ENCODE measurements at regions of chr22 and their contacts with region 1.

Region 1: GRCh38 chr22:38705235-38706100 is at the start of gene GTPBP1:
- DNase-seq: peak; percentile 98
- H3K4me3 Mint-ChIP-seq: peak within 1 kb of the TSS; percentile 92
- H3K27ac Mint-ChIP-seq: peak within 1 kb of the TSS; percentile 97
- H3K4me1 Mint-ChIP-seq: peaks cover 47% of the 10 kb centered on the region
- H3K27me3 Mint-ChIP-seq: peaks cover 1% of the 10 kb centered on the region
- total RNA-seq, gene GTPBP1: 95.4 to 98.1 TPM

Region 2: GRCh38 chr22:38181453-38182247 is 523.8 kb before region 1 on chr22 and contains the start of gene PLA2G6:
- CTCF ChIA-PET with region 1: no interaction called
- POLR2A ChIA-PET with region 1: interaction called, 3 read pairs
- intact Hi-C with region 1: loop called (anchors 5 kb)
- DNase-seq: peak; percentile 99
- H3K4me3 Mint-ChIP-seq: peak within 1 kb of the TSS; percentile 86
- H3K27ac Mint-ChIP-seq: peak within 1 kb of the TSS; percentile 99
- H3K4me1 Mint-ChIP-seq: peaks cover 44% of the 10 kb centered on the region
- H3K27me3 Mint-ChIP-seq: no peaks in the 10 kb centered on the region
- total RNA-seq, gene PLA2G6: 63.7 to 69.5 TPM

Region 3: GRCh38 chr22:38569972-38570778 is 135.3 kb before region 1 on chr22 and contains the start of gene DMC1:
- CTCF ChIA-PET with region 1: no interaction called
- POLR2A ChIA-PET with region 1: no interaction called
- intact Hi-C with region 1: loop called (anchors 1 kb)
- DNase-seq: peak; percentile 100
- H3K4me3 Mint-ChIP-seq: peak within 1 kb of the TSS; percentile 84
- H3K27ac Mint-ChIP-seq: peak within 1 kb of the TSS; percentile 90
- H3K4me1 Mint-ChIP-seq: peaks cover 12% of the 10 kb centered on the region
- H3K27me3 Mint-ChIP-seq: no peaks in the 10 kb centered on the region
- total RNA-seq, gene DMC1: 15.8 to 20.1 TPM

Region 4: DNA sequence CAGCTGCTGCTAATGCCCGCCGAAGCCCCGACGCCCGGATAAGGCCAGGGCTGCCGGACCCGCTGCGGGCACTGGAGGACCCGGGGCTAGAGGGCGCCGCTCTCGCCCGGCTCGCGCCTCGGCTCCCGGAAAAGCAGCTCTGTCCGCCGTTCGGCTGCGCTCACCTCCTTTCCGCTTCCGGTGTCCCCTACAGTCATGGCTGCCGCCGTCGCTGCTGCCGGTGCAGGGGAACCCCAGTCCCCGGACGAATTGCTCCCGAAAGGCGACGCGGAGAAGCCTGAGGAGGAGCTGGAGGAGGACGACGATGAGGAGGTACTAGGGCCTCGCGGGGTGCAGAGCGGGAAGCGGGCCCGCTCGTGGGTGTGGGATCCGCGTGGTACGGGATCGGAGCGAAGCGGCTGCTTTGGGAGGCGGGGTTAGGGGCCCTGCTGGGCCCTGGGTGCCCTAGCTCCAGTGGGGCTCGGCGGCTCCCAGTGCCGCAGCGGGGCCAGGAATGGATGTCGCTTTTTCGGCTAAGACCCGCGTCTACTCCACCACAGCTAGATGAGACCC is 23.6 kb before region 1 on chr22 and contains the start of gene TOMM22:
- CTCF ChIA-PET with region 1: interaction called, 40 read pairs
- POLR2A ChIA-PET with region 1: interaction called, 19 read pairs
- intact Hi-C with region 1: no loop called
- DNase-seq: peak; percentile 90
- H3K4me3 Mint-ChIP-seq: peak within 1 kb of the TSS; percentile 99
- H3K27ac Mint-ChIP-seq: peak within 1 kb of the TSS; percentile 94
- H3K4me1 Mint-ChIP-seq: peaks cover 23% of the 10 kb centered on the region
- H3K27me3 Mint-ChIP-seq: no peaks in the 10 kb centered on the region
- total RNA-seq, gene TOMM22: 122 to 128 TPM

Region 5: DNA sequence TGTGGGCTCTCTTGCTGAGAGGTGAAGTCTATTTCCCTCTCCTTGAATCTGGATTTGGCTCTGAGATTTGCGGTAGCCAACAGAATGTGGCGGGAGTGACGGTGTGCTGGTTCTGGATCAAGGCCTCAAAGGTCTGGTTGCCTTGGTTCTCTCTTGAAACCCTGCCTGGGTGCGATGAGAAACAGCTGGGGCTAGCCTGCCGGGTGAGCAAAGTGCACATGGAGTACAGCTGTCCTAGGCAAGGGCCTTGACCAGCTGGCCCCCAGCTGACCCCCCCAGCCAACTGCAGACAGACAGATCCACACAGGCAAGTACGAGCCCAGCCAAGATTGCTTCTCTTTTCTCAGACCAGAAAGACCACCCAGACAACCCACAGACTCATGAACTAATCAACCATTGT is 39.5 kb after region 1 on chr22:
- CTCF ChIA-PET with region 1: no interaction called
- POLR2A ChIA-PET with region 1: no interaction called
- intact Hi-C with region 1: no loop called
- DNase-seq: no peak
- H3K4me3 Mint-ChIP-seq: no peak overlapping the region
- H3K27ac Mint-ChIP-seq: peak overlapping the region; percentile 54
- H3K4me1 Mint-ChIP-seq: peaks cover 9% of the 10 kb centered on the region
- H3K27me3 Mint-ChIP-seq: no peaks in the 10 kb centered on the region

Region 6: GRCh38 chr22:38782402-38783094 is 77.1 kb after region 1 on chr22:
- CTCF ChIA-PET with region 1: no interaction called
- POLR2A ChIA-PET with region 1: no interaction called
- intact Hi-C with region 1: no loop called
- DNase-seq: peak; percentile 28
- H3K4me3 Mint-ChIP-seq: no peak overlapping the region
- H3K27ac Mint-ChIP-seq: peak overlapping the region; percentile 53
- H3K4me1 Mint-ChIP-seq: peaks cover 4% of the 10 kb centered on the region
- H3K27me3 Mint-ChIP-seq: no peaks in the 10 kb centered on the region

Region 7: GRCh38 chr22:39152511-39153219 is 447.2 kb after region 1 on chr22 and contains the start of gene CBX7:
- CTCF ChIA-PET with region 1: no interaction called
- POLR2A ChIA-PET with region 1: no interaction called
- intact Hi-C with region 1: loop called (anchors 1 kb)
- DNase-seq: peak; percentile 97
- H3K4me3 Mint-ChIP-seq: peak within 1 kb of the TSS; percentile 80
- H3K27ac Mint-ChIP-seq: peak within 1 kb of the TSS; percentile 71
- H3K4me1 Mint-ChIP-seq: peaks cover 42% of the 10 kb centered on the region
- H3K27me3 Mint-ChIP-seq: peaks cover 13% of the 10 kb centered on the region
- total RNA-seq, gene CBX7: 35.7 to 37.7 TPM